ENCODE measurements at regions of chr1 and their contacts with region 1.

Region 1: GRCh38 chr1:45348716-45349677 is 8.8 kb upstream of the MUTYH start:
- DNase-seq: no peak

Region 2: DNA sequence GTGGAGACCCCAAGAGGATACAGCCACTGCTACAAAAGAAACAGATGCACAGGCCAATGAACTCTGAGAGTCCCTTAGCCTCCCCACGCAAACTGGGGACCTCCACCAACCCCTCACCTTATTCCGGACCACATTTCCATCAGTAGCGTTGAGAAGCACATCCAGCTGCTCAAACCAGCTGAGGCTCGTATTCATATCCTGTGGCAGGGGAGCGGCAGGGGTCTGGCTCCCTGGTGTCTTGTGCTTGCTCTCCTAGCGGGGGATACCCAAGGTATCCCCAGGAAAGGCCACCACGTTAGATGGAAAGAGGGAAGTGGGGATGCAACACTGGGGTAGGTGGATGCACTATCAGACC is 150.4 kb after region 1 on chr1:
- CTCF ChIA-PET with region 1: interaction called, 3 read pairs
- POLR2A ChIA-PET with region 1: interaction called, 12 read pairs
- DNase-seq: no peak